ENCODE measurements at regions of chr11 and their contacts with region 1.

Region 1: DNA sequence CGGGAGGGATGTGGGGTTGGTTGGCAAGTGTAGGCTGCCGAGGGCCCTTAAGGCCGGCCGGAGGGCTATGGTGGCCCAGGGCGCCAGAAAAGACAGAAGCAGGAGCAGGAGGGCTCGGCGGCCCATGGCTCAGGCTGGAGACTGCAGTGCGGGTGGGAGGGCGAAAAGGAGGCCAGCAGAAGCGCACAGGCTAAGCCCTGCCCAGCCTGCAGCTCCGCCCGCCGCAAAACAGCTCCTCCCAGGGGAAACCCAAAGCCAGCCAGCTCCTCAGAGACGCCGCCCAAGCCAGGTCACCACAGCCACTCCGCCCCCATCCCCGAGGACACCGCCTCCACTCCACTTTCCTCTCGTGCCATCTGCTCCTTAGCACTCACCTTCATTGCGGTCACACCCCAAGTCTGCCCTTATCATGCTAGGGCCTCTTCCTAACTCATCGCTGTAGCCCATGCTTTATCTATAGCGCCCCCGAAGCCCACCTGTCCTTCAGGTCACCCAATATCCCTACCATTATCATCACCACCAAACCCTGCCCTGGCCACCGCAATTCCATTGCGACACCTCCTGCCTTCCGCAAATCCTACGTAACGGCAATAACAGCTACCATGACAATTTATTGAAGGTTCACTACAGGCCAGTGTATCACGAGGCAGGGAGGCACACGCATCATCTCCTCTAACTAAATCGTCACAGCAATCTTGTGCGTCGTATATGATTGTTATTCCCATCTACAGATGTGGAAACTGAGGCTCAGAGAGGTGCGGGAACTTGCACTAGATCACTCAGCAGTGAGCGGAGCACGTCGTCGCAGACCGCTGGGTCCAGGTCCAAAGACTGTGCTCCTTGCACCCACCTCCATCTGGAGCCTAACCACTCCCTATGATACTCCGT is at the start of gene PRCP:
- DNase-seq: peak; percentile 93
- ATAC-seq: peak; percentile 73 to 80
- H3K4me3 ChIP-seq: peak within 1 kb of the TSS; percentile 66 to 94 (median 82)
- H3K27ac ChIP-seq: peak within 1 kb of the TSS; percentile 90 to 96 (median 94)
- H3K4me1 ChIP-seq: peaks cover 21 to 32% of the 10 kb centered on the region in 2 donors
- H3K27me3 ChIP-seq: no peaks in the 10 kb centered on the region
- CTCF ChIP-seq: peak in 1 of 5 experiments; percentile 15
- POLR2A ChIP-seq: peak; percentile 64 to 74
- total RNA-seq, gene PRCP: 7.1 to 17.8 (median 9.5) TPM

Region 2: DNA sequence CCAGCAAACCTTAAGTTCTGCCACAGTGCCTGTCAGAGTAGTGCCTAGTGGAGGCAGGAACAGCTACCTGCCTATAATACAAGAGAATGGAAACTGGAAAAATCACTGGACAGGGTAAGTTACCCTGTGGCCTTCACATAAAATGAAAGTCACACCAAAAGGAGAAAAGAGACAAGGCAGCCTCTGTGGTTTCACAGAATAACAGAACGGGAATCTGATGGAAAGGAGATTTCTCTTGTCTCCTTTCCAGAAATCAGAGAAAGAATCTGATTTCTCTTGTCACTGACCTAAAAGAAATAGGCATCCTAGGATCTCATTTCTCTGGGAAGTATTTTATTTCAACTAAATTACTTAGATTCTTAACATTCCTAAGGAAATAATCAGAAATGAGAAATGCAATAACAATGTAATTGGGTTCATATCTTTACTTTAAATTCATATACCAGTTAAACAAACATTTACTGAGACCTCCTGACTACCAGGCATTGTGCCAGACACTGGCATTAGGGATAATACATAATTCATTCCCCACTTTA is 41.9 kb before region 1 on chr11:
- in situ Hi-C with region 1: no loop called
- intact Hi-C with region 1: no loop called
- DNase-seq: no peak
- ATAC-seq: no peak
- H3K4me3 ChIP-seq: no peak overlapping the region
- H3K27ac ChIP-seq: no peak overlapping the region
- H3K4me1 ChIP-seq: peaks cover 0 to 11% of the 10 kb centered on the region in 2 donors
- H3K27me3 ChIP-seq: no peaks in the 10 kb centered on the region
- CTCF ChIP-seq: no peak
- POLR2A ChIP-seq: no peak

Region 3: DNA sequence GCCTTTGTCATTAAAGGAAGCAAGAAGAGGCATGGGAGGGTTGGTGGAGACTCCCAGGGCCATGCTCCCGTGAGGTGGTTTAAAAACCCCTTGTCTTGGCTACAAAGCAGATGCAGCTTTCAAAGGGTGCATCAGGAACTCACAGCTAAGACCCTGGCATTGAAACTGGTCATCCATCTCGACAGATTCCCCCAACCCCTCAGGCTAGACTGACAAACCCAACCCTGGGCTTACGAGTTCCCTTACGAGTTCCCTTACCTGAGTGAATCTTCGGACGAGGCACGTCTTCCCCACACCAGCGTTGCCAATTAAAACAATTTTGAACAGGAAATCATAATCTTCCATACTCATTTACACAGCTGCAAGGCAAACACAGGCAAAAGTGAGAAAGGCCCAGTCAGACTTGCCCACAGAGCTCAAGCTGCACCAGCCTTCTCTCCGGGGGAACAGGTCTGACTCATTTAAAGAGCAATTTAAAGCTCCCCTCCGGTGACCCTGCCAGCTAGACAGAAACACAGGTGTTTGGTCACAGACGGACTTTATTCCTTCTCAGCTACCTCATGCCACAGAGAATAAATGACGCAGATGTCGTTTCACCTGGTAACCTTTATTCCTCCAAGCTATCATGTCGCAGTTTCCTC is 96.6 kb after region 1 on chr11:
- in situ Hi-C with region 1: no loop called
- intact Hi-C with region 1: loop called (anchors 5 kb)
- DNase-seq: peak in 1 of 2 donors; percentile 52
- ATAC-seq: peak; percentile 37 to 57
- H3K4me3 ChIP-seq: peak overlapping the region in 2 of 4 donors; percentile 11 to 24
- H3K27ac ChIP-seq: peak overlapping the region; percentile 55 to 75 (median 69)
- H3K4me1 ChIP-seq: peaks cover 92 to 97% of the 10 kb centered on the region in 2 donors
- H3K27me3 ChIP-seq: no peaks in the 10 kb centered on the region
- CTCF ChIP-seq: no peak
- POLR2A ChIP-seq: peak in 1 of 2 donors; percentile 20

Region 4: DNA sequence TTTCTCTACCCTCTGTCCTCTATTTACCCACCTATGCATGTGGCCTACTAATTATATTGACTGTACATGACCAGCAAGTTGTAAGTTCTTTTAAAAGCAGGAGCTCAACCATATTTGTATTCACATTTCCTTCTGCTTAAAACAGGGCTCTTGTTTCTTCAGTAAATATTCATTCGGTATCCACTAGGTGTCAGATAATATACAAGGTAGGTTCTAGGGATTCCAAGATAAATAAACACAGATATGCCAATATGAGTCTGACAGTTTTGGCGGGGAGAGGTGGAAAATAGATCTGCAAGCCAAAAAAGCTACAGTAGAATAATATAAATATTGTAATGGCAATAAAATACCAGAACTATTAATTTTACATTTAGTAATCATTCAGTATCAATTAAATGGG is 186.5 kb after region 1 on chr11:
- in situ Hi-C with region 1: loop called in 1 of 4 experiments (anchors 25 kb)
- intact Hi-C with region 1: loop called (anchors 1 kb)
- DNase-seq: no peak
- ATAC-seq: no peak
- H3K4me3 ChIP-seq: no peak overlapping the region
- H3K27ac ChIP-seq: no peak overlapping the region
- H3K4me1 ChIP-seq: peaks cover 3 to 9% of the 10 kb centered on the region in 2 donors
- H3K27me3 ChIP-seq: no peaks in the 10 kb centered on the region
- CTCF ChIP-seq: peak in 1 of 5 experiments; percentile 19
- POLR2A ChIP-seq: no peak

Region 5: GRCh38 chr11:83156150-83156995 is 255.9 kb after region 1 on chr11:
- in situ Hi-C with region 1: no loop called
- intact Hi-C with region 1: loop called (anchors 1 kb)
- DNase-seq: peak; percentile 100
- ATAC-seq: peak; percentile 92
- H3K4me3 ChIP-seq: peak overlapping the region; percentile 61 to 100 (median 82)
- H3K27ac ChIP-seq: peak overlapping the region; percentile 87 to 100 (median 97)
- H3K4me1 ChIP-seq: peaks cover 21% of the 10 kb centered on the region in 2 donors
- H3K27me3 ChIP-seq: no peaks in the 10 kb centered on the region
- CTCF ChIP-seq: no peak
- POLR2A ChIP-seq: peak in 1 of 2 donors; percentile 58

Region 6: GRCh38 chr11:83193315-83194280 is 293.1 kb after region 1 on chr11 and contains the start of gene ANKRD42:
- in situ Hi-C with region 1: loop called in 2 of 4 experiments (anchors 10 kb)
- intact Hi-C with region 1: loop called (anchors 2 kb)
- DNase-seq: peak; percentile 91
- ATAC-seq: peak; percentile 98 to 99
- H3K4me3 ChIP-seq: peak within 1 kb of the TSS; percentile 72 to 87 (median 84)
- H3K27ac ChIP-seq: peak within 1 kb of the TSS; percentile 84 to 95 (median 90)
- H3K4me1 ChIP-seq: peaks cover 18 to 23% of the 10 kb centered on the region in 2 donors
- H3K27me3 ChIP-seq: no peaks in the 10 kb centered on the region
- CTCF ChIP-seq: peak in 1 of 5 experiments; percentile 17
- POLR2A ChIP-seq: peak; percentile 50 to 78
- total RNA-seq, gene ANKRD42: 2.1 to 3.7 (median 3.4) TPM

Region 7: DNA sequence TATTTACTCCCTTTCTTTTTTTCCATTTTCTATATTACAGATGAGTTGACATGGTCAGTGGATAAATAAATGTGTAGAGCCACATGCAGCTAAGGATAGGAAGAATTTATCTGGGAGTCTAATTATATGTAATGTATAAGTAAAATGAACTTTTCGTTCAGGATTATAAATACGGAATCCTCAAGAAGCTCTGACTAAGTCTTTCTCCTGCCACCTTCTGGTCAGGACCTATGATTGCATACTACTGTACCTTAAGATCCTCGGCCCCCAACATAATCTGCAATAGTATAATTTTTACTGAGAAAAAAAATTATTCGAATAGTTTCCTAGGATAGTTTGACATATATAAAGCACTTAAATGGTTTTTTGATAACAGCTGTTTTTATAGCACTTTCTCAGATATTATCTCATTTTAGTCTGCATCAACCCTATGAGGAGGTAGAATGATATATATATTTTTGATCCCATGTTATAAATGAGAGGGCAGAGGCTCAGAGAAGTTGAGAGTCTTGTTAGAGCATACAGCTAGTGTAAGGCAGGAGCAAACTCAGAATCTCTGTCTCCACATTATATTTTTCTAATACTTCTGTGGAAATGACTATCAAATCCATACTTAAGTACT is 349.6 kb after region 1 on chr11:
- in situ Hi-C with region 1: loop called (anchors 5 to 25 kb)
- intact Hi-C with region 1: no loop called
- DNase-seq: no peak
- ATAC-seq: peak in 1 of 2 donors; percentile 72
- H3K4me3 ChIP-seq: no peak overlapping the region
- H3K27ac ChIP-seq: no peak overlapping the region
- H3K4me1 ChIP-seq: no peaks in the 10 kb centered on the region
- H3K27me3 ChIP-seq: no peaks in the 10 kb centered on the region
- CTCF ChIP-seq: peak; percentile 45 to 69 (median 63)
- POLR2A ChIP-seq: no peak

Measured in gastrocnemius medialis (tissue), 4 donors.